Common myeloid progenitor, CD34-positive (primary cell): ENCODE measurements at regions of chrX and their contacts with region 1.

Region 1: GRCh38 chrX:120308959-120309872 is 2.0 kb downstream of the TMEM255A start:
- DNase-seq: peak; percentile 73 to 87 (median 81)
- H3K4me3 ChIP-seq: peak overlapping the region in 6 of 7 experiments; percentile 44 to 75 (median 54)
- H3K27ac ChIP-seq: no peak overlapping the region
- H3K4me1 ChIP-seq: peaks cover 0 to 44% (median 33%) of the 10 kb centered on the region in 4 experiments
- H3K27me3 ChIP-seq: peaks cover 7 to 80% (median 33%) of the 10 kb centered on the region in 5 experiments

Region 2: DNA sequence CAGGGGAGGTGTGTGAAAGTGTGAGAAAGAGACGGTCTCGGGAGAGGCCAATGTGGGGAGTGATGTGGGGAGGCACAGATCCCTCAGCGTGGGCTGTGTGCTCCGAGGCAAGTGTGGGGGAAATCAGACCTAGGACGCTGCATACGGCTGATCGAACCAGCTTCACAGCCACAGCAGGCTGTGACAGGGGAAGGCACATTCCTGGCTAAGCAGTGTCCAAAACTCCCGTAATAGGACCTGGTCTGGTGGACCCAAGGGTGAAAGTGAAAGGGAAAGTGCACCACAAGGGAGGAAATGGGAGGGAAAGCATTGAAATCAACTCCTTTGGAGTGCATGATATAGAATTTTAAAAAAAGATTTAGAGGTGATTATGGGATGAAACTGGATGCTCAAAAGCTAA is 161.7 kb before region 1 on chrX:
- CTCF ChIA-PET with region 1: no interaction called
- POLR2A ChIA-PET with region 1: no interaction called
- DNase-seq: no peak
- H3K4me3 ChIP-seq: no peak overlapping the region
- H3K27ac ChIP-seq: no peak overlapping the region
- H3K4me1 ChIP-seq: peaks cover 0 to 6% (median 0%) of the 10 kb centered on the region in 4 experiments
- H3K27me3 ChIP-seq: peaks cover 0 to 9% (median 0%) of the 10 kb centered on the region in 5 experiments

Region 3: GRCh38 chrX:120250522-120251271 is 58.5 kb before region 1 on chrX and contains the start of gene ZBTB33:
- CTCF ChIA-PET with region 1: interaction called, 12 read pairs
- POLR2A ChIA-PET with region 1: no interaction called
- DNase-seq: peak; percentile 91 to 93 (median 93)
- H3K4me3 ChIP-seq: peak within 1 kb of the TSS; percentile 57 to 91 (median 75)
- H3K27ac ChIP-seq: peak within 1 kb of the TSS; percentile 81 to 90
- H3K4me1 ChIP-seq: peaks cover 0 to 5% (median 2%) of the 10 kb centered on the region in 4 experiments
- H3K27me3 ChIP-seq: peaks cover 0 to 10% (median 0%) of the 10 kb centered on the region in 5 experiments